AG04449 (cell line): ENCODE measurements at regions of chr3 and their contacts with region 1.

Region 1: GRCh38 chr3:149536429-149536828 is 61.9 kb downstream of the TM4SF4 start:
- DNase-seq: no peak
- H3K4me3 ChIP-seq: no peak overlapping the region
- CTCF ChIP-seq: no peak

Region 2: GRCh38 chr3:149216193-149216869 is 320.1 kb before region 1 on chr3:
- CTCF ChIA-PET with region 1: no interaction called
- POLR2A ChIA-PET with region 1: no interaction called
- DNase-seq: no peak
- H3K4me3 ChIP-seq: no peak overlapping the region
- CTCF ChIP-seq: no peak

Region 3: DNA sequence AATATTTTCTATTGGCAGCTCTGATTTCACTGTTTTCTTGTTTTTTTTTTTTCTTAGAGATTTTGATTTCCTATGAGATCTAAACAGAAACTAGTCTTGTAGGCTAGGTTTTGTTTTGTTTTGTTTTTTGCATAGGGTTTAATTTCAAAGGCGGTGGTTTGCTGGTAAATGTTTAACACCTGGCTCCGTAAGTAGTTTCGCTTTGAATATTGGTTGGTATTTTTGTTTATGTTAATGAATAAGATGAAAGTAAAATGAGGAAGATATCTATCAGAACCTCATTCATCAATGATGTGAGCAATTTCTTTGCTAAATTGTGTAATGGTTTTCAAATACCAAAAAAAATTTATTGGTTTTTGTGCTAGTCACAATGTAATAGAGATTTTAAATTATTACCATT is 119.3 kb before region 1 on chr3:
- CTCF ChIA-PET with region 1: no interaction called
- POLR2A ChIA-PET with region 1: no interaction called
- DNase-seq: no peak
- H3K4me3 ChIP-seq: no peak overlapping the region
- CTCF ChIP-seq: no peak

Region 4: DNA sequence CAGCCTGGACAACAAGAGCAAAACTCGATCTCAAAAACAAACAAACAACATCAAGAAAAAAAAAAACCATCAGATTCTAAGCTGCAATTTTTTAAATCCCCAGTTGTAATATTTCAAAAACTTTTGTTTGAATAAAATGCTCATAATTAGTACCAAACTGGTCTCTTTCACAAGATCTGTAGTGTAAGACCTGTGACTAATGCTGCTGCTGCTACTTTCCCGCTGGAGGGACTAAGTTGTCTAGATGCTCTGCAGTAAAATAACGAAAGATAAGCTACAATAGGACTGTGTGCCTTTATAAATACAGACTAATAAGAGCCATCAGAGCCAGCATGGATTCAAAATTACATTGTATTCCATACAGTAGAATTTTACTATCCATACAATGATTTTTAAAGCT is 16.5 kb before region 1 on chr3:
- CTCF ChIA-PET with region 1: interaction called, 28 read pairs
- POLR2A ChIA-PET with region 1: no interaction called
- DNase-seq: no peak
- H3K4me3 ChIP-seq: no peak overlapping the region
- CTCF ChIP-seq: no peak

Region 5: GRCh38 chr3:149553781-149554451 is 17.5 kb after region 1 on chr3:
- CTCF ChIA-PET with region 1: interaction called, 15 read pairs
- POLR2A ChIA-PET with region 1: interaction called, 4 read pairs
- DNase-seq: no peak
- H3K4me3 ChIP-seq: no peak overlapping the region
- CTCF ChIP-seq: no peak

Region 6: DNA sequence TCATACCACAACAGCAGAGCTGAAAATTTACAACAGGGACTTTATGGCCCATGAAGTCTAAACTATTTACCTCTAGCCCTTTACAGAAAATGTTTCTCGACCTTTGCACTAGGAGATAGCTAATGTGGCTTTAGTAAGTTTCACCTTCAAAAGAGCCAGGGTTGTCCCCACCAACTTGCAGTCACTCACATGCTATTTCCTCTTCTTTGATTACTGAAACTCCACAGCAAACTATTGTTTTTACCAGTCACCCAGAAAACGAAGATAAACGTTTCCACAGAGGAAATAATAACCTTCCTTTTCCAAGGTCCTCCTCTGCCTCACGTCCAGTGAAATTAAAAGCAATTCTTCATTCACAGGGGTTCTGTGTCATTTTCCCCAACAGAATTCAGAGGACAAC is 73.2 kb after region 1 on chr3:
- CTCF ChIA-PET with region 1: no interaction called
- POLR2A ChIA-PET with region 1: no interaction called
- DNase-seq: no peak
- H3K4me3 ChIP-seq: no peak overlapping the region
- CTCF ChIP-seq: no peak

Region 7: GRCh38 chr3:149657926-149658733 is 121.7 kb after region 1 on chr3 and contains the start of gene WWTR1:
- CTCF ChIA-PET with region 1: interaction called, 15 read pairs
- POLR2A ChIA-PET with region 1: interaction called, 21 read pairs
- DNase-seq: peak; percentile 79
- H3K4me3 ChIP-seq: peak within 1 kb of the TSS; percentile 93
- CTCF ChIP-seq: peak; percentile 22

Region 8: DNA sequence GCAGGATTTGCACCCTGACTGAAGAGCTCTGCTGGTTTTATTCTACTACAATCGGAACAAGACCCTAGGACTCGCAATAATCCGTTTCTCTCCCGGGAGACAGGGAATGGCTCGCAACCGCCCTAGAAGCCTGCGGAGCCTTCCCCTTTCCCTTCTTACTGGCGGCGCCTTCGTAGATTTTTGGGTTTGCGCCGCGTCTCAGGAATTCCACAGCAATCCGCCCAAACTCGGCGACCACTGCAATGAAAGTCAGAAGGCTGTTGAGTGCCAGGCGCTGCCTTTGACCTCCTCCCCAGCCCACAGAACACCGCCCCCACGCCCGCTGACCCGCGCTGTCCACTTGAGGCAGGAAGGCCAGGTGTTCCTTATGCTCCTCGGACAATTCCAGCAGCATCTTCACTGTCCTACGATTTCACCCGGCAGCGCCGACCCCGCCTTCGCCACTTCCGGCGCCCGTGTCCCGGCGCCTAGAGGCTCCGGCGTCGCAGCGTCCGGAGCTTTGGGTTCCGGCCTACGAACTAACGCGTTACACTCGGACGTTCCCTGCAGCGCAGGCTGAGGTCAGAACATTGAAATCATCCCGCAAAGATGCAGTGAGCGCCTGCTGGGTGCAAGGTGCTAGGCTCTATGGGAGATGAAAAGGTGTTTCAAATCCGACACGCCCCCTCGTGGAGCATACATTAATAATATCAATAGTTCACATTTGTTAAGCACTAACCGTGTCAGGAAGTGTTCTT is 215.8 kb after region 1 on chr3 and contains the start of gene COMMD2:
- CTCF ChIA-PET with region 1: interaction called, 21 read pairs
- POLR2A ChIA-PET with region 1: interaction called, 3 read pairs
- DNase-seq: no peak
- H3K4me3 ChIP-seq: peak within 1 kb of the TSS; percentile 98
- CTCF ChIP-seq: no peak

Region 9: GRCh38 chr3:149832086-149832485 is 295.7 kb after region 1 on chr3:
- CTCF ChIA-PET with region 1: no interaction called
- POLR2A ChIA-PET with region 1: no interaction called
- DNase-seq: peak; percentile 38
- H3K4me3 ChIP-seq: no peak overlapping the region
- CTCF ChIP-seq: no peak